Activated CD4-positive, alpha-beta T cell treated with anti-CD3 and anti-CD28 coated beads for 36 hours (primary cell): ENCODE measurements at regions of chr9 and their contacts with region 1.

Region 1: DNA sequence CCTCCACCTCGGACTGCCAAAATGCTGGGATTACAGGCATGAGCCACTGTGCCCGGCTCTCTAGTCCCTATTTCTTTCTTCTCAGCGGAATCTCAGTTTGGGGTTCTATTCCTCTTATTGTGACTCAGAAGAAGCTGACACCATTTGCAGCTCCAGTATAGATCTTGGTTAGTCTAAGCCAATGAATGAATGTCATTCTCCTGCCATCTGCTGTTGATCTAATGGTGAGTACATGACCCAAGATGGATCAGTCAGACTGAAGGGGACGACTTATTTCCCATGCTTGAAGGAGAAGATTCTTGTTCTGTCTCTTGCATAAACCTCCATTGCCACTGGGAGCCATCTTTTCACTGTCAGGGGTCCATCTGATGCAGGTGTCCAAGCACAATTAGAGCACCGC is 76.0 kb upstream of the KLF9 start:
- DNase-seq: no peak
- ATAC-seq: peak; percentile 73
- H3K4me3 Mint-ChIP-seq: no peak overlapping the region
- H3K27ac Mint-ChIP-seq: no peak overlapping the region
- H3K4me1 Mint-ChIP-seq: peaks cover 14% of the 10 kb centered on the region
- H3K27me3 Mint-ChIP-seq: peaks cover 7% of the 10 kb centered on the region

Region 2: GRCh38 chr9:70477146-70477745 is 13.2 kb before region 1 on chr9:
- CTCF ChIA-PET with region 1: interaction called, 4 read pairs
- POLR2A ChIA-PET with region 1: no interaction called
- intact Hi-C with region 1: loop called in 1 of 2 experiments (anchors 1 kb)
- DNase-seq: no peak
- ATAC-seq: no peak
- H3K4me3 Mint-ChIP-seq: no peak overlapping the region
- H3K27ac Mint-ChIP-seq: no peak overlapping the region
- H3K4me1 Mint-ChIP-seq: no peaks in the 10 kb centered on the region
- H3K27me3 Mint-ChIP-seq: no peaks in the 10 kb centered on the region